CD4-positive, alpha-beta T cell (primary cell): ENCODE measurements at regions of chr19 and their contacts with region 1.

Region 1: DNA sequence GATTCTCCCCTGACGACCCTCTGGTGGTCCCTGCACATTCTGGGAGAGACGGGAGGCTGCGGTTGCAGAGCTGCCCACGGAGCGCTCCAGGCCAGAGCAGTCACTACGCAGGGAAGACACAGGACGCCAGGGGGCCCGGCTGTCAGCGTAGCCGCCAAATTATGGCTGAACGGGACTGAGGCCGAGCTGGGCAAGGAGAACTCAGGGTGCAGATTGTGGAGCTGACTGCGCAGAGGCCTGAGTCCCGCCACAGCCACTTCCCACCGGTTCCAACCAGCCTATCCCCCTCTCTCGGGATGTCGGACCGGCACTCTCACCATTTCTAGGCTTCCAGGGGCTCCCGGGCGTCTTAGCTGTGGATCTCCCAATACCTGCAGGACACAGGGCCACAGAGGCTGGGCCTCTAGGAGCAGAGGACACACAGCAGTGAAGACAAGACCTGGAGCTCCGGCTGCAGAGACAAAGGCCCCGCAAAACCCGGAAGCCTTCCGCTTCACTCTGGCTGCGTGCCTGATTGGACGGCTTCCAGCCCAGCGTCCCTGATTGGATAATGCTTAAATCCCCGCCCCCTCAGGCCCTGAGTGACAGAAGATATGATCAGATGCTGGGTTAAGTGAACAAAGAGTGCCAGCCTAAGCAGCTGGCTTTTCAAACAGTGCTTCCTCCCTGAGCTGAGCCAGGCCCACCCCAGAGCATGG is at the start of gene ZNF737:
- DNase-seq: peak; percentile 86 to 97 (median 91)
- ATAC-seq: peak; percentile 96
- H3K4me3 ChIP-seq: peak within 1 kb of the TSS; percentile 82
- H3K4me3 Mint-ChIP-seq: peak within 1 kb of the TSS; percentile 100
- H3K27ac ChIP-seq: peak within 1 kb of the TSS; percentile 80 to 88
- H3K27ac Mint-ChIP-seq: peak within 1 kb of the TSS; percentile 98
- H3K4me1 ChIP-seq: peaks cover 10% of the 10 kb centered on the region
- H3K4me1 Mint-ChIP-seq: peaks cover 29% of the 10 kb centered on the region
- H3K27me3 ChIP-seq: no peaks in the 10 kb centered on the region
- H3K27me3 Mint-ChIP-seq: no peaks in the 10 kb centered on the region
- CTCF ChIP-seq: peak; percentile 30
- total RNA-seq, gene ZNF737: 11.0 to 11.7 TPM

Region 2: DNA sequence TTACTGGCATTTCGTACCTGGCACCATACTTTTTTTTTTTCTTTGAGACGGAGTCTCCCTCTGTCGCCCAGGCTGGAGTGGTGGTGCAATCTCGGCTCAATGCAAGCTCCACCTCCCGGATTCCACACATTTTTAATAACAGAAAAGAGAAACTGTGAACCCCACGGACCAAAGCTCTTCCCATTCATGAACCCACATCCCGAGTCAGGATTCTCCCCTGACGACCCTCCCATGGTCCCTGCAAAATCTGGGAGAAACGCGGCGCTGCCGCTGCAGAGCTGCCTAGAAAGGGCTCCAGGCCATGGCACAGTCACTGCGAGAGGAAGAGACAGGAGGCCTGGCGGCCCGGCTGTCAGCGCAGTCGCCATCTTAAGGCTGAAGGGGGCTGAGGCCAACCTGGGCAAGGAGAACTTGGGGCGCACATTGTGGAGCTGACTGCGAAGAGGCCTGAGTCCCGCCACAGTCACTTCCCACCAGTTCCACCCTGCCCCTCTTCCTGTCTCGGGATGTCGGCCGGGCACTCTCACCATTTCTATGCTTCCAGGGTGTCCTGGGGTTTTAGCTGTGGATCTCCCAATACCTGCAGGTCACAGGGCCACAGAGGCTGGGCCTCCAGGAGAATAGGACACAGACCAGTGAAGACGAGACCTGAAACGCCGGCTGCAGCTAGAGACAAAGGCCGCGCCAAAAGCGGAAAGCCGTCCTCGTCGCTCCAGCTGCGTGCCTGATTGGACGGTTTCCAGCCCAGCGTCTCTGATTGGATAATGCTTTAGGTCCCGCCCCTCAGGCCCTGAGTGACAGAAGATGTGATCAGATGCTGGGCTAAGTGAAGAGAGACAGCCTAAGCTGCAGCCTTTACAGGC is 327.5 kb before region 1 on chr19:
- CTCF ChIA-PET with region 1: no interaction called
- POLR2A ChIA-PET with region 1: interaction called, 10 read pairs
- intact Hi-C with region 1: no loop called
- DNase-seq: peak; percentile 71 to 93 (median 82)
- ATAC-seq: peak; percentile 98
- H3K4me3 ChIP-seq: peak overlapping the region; percentile 88
- H3K4me3 Mint-ChIP-seq: peak overlapping the region; percentile 97
- H3K27ac ChIP-seq: no peak overlapping the region
- H3K27ac Mint-ChIP-seq: peak overlapping the region; percentile 70
- H3K4me1 ChIP-seq: peaks cover 11% of the 10 kb centered on the region
- H3K4me1 Mint-ChIP-seq: peaks cover 12% of the 10 kb centered on the region
- H3K27me3 ChIP-seq: no peaks in the 10 kb centered on the region
- H3K27me3 Mint-ChIP-seq: no peaks in the 10 kb centered on the region
- CTCF ChIP-seq: no peak

Region 3: GRCh38 chr19:20661150-20661819 is 95.8 kb after region 1 on chr19 and contains the start of gene ZNF626:
- CTCF ChIA-PET with region 1: interaction called, 3 read pairs
- POLR2A ChIA-PET with region 1: interaction called, 72 read pairs
- intact Hi-C with region 1: loop called (anchors 2 to 5 kb)
- DNase-seq: peak; percentile 79 to 96 (median 86)
- ATAC-seq: peak; percentile 98
- H3K4me3 ChIP-seq: peak within 1 kb of the TSS; percentile 93
- H3K4me3 Mint-ChIP-seq: peak within 1 kb of the TSS; percentile 98
- H3K27ac ChIP-seq: peak within 1 kb of the TSS; percentile 59 to 81
- H3K27ac Mint-ChIP-seq: peak within 1 kb of the TSS; percentile 98
- H3K4me1 ChIP-seq: peaks cover 19% of the 10 kb centered on the region
- H3K4me1 Mint-ChIP-seq: peaks cover 65% of the 10 kb centered on the region
- H3K27me3 ChIP-seq: no peaks in the 10 kb centered on the region
- H3K27me3 Mint-ChIP-seq: no peaks in the 10 kb centered on the region
- CTCF ChIP-seq: no peak
- total RNA-seq, gene ZNF626: 6.7 to 6.8 TPM

Region 4: DNA sequence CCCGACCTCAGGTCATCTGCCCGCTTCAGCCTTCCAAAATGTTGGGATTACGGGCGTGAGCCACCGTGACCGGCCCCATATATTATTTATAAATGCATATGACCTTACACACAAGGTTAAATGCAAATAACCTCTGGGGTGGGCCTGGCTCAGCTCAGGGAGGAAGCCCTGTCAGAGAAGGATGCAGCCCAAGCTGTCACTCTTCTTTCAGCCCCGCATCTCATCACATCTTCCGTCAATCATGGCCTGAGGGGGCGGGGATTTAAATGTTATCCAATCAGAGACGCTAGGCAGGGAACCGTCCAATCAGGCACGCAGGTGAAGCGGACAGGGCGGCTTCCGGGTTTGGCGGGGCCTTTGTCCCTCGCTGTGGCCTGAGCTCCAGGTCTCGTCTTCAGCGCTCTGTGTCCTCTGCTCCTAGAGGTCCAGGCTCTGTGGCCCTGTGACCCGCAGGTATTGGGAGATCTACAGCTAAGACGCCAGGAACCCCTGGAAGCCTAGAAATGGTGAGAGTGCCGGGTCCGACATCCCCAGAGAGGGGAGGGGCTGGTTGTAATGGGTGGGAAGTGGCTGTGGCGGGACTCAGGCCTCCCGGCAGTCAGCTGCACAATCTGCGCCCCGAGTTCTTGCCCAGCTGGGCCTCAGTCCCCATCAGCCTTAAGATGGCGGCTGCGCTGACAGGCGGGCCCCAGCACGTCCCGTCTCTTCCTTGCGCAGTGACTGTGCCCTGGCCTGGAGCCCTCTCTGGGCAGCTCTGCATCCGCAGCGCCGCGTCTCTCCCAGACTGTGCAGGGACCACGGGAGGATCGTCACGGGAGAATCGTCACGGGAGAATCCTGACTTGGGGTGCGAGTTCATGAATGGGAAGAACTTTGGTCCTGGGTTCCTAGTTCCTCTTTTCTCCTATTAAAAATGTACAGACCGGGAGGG is 455.1 kb after region 1 on chr19 and contains the start of gene ZNF430:
- CTCF ChIA-PET with region 1: no interaction called
- POLR2A ChIA-PET with region 1: interaction called, 23 read pairs
- intact Hi-C with region 1: no loop called
- DNase-seq: peak; percentile 82 to 98 (median 87)
- ATAC-seq: peak; percentile 95
- H3K4me3 ChIP-seq: peak within 1 kb of the TSS; percentile 98
- H3K4me3 Mint-ChIP-seq: peak within 1 kb of the TSS; percentile 98
- H3K27ac ChIP-seq: peak within 1 kb of the TSS; percentile 86 to 93
- H3K27ac Mint-ChIP-seq: peak within 1 kb of the TSS; percentile 100
- H3K4me1 ChIP-seq: peaks cover 29% of the 10 kb centered on the region
- H3K4me1 Mint-ChIP-seq: peaks cover 52% of the 10 kb centered on the region
- H3K27me3 ChIP-seq: no peaks in the 10 kb centered on the region
- H3K27me3 Mint-ChIP-seq: no peaks in the 10 kb centered on the region
- CTCF ChIP-seq: no peak
- total RNA-seq, gene ZNF430: 40.5 to 43.8 TPM

Region 5: GRCh38 chr19:21396893-21397572 is 831.6 kb after region 1 on chr19 and contains the start of gene ZNF493:
- CTCF ChIA-PET with region 1: no interaction called
- POLR2A ChIA-PET with region 1: interaction called, 11 read pairs
- intact Hi-C with region 1: no loop called
- DNase-seq: peak; percentile 81 to 97 (median 86)
- ATAC-seq: peak; percentile 99
- H3K4me3 ChIP-seq: peak within 1 kb of the TSS; percentile 97
- H3K4me3 Mint-ChIP-seq: peak within 1 kb of the TSS; percentile 98
- H3K27ac ChIP-seq: peak within 1 kb of the TSS; percentile 47 to 72
- H3K27ac Mint-ChIP-seq: peak within 1 kb of the TSS; percentile 82
- H3K4me1 ChIP-seq: peaks cover 14% of the 10 kb centered on the region
- H3K4me1 Mint-ChIP-seq: peaks cover 43% of the 10 kb centered on the region
- H3K27me3 ChIP-seq: no peaks in the 10 kb centered on the region
- H3K27me3 Mint-ChIP-seq: no peaks in the 10 kb centered on the region
- CTCF ChIP-seq: no peak
- total RNA-seq, gene ZNF493: 39.5 to 41.2 TPM